Posterior vena cava (tissue), 2 donors: ENCODE measurements at regions of chr11 and their contacts with region 1.

Region 1: GRCh38 chr11:35288817-35289541 is 130.4 kb downstream of the SLC1A2 start:
- DNase-seq: no peak

Region 2: GRCh38 chr11:35173011-35173511 is 115.9 kb before region 1 on chr11:
- intact Hi-C with region 1: loop called in 1 of 2 experiments (anchors 10 kb)
- DNase-seq: no peak

Region 3: DNA sequence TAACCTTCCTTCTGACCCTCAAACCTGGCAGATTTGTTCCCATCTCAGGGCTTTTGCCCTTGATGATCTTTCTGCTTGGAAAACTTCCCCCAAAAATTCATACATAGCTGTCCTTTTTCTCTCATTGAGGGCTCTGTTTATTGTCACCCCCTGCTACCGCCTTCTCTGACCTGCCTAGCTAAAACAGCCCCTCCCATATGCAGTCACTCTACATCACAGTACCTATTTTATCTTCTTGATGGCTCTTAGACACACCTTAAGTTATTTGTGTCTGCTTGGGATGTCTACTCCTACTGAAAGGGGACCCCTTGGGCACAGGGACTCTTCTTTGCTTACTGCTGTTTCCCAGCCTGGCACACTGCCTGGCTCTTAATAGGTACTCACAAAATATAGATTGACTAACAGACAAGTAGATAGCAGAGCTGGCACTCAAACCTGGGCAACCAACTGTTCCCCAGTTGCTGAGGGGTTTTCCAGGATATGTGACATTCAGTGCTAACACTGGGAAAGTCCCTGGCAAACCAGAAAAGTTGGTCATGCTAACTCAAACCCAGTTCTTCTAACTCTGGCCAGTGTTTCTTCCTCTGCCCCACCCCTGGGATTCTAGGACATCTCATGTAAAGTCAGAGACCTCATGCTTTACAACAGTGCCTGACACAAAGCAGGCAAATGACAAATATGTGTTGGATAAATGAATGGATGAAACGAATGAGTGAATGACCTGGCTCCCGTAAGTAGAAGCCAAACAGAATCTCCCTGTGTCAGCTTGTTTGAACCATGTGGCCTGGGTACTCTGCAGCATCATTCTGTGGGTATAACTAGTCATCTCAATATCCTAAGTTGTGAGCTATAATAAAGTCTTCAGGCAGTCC is 309.5 kb after region 1 on chr11:
- intact Hi-C with region 1: no loop called
- DNase-seq: no peak